ENCODE measurements at regions of chr18 and their contacts with region 1.

Region 1: GRCh38 chr18:9082711-9083510 is 19.6 kb upstream of the NDUFV2 start:
- DNase-seq: peak; percentile 74
- H3K4me3 Mint-ChIP-seq: peak overlapping the region; percentile 69
- H3K27ac Mint-ChIP-seq: peak overlapping the region; percentile 100
- H3K4me1 Mint-ChIP-seq: peaks cover 78% of the 10 kb centered on the region
- H3K27me3 Mint-ChIP-seq: no peaks in the 10 kb centered on the region

Region 2: DNA sequence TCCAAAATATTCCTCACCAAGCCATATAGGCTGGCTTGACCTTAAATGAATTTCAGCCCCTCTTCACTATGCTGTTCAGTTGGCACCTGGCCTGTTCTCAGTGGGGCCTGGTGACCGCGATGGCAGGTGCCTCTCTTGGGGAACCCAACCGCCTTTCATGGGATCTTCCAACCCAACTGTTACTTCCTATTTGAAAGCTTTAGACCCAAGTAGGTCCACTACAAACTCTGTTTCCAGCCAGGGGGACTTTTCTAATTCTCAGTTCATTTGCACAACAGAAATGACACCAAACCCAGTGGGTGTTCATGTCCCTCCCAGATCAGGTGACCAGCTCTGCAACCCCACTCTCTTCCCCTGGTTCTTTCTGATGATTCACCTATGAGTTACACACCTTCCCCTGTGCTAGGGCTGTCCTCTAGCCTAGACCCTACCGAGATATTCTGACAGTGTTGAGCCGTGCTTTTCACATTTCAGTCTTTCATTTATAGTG is 16.0 kb before region 1 on chr18:
- CTCF ChIA-PET with region 1: no interaction called
- POLR2A ChIA-PET with region 1: interaction called, 1,351 read pairs
- DNase-seq: no peak
- H3K4me3 Mint-ChIP-seq: no peak overlapping the region
- H3K27ac Mint-ChIP-seq: peak overlapping the region; percentile 81
- H3K4me1 Mint-ChIP-seq: peaks cover 45% of the 10 kb centered on the region
- H3K27me3 Mint-ChIP-seq: no peaks in the 10 kb centered on the region

Region 3: DNA sequence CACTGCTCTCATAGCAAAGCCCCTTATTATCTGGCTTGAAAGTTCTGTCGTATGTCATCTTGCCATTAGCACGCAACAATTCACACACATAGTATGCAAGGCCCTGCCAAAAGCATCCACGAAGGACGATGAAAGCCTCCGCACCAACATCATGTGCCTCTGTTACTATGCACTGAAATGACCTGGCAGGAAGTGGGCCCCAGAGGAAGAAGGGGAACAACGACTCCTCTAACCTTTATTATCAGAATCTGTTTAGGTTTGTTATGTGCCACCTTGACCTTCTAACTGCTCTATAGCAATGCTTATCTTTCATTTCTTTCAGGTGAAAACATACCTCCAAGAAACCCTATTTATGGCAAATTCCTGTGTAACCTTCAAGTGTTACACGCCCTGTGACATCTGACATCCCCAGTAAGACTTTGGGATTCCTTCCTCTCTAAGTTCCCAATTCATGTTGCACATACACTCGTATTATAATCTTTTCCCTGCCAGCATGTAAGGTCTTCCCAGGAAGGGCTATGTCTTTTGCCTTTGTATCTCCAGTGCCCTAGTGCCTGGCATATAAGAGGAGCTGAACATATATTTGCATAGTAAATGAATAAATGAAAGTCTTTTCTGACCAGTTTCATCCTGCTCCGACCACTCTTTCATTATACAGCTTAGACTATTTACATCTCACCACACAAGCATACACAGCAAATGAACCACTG is 12.5 kb after region 1 on chr18:
- CTCF ChIA-PET with region 1: interaction called, 19 read pairs
- POLR2A ChIA-PET with region 1: interaction called, 1,351 read pairs
- DNase-seq: peak; percentile 77
- H3K4me3 Mint-ChIP-seq: peak overlapping the region; percentile 62
- H3K27ac Mint-ChIP-seq: peak overlapping the region; percentile 98
- H3K4me1 Mint-ChIP-seq: peaks cover 71% of the 10 kb centered on the region
- H3K27me3 Mint-ChIP-seq: no peaks in the 10 kb centered on the region

Region 4: GRCh38 chr18:9102508-9103375 is 19.8 kb after region 1 on chr18 and contains the start of gene NDUFV2:
- CTCF ChIA-PET with region 1: interaction called, 17 read pairs
- POLR2A ChIA-PET with region 1: interaction called, 1,351 read pairs
- DNase-seq: peak; percentile 99
- H3K4me3 Mint-ChIP-seq: peak within 1 kb of the TSS; percentile 94
- H3K27ac Mint-ChIP-seq: peak within 1 kb of the TSS; percentile 96
- H3K4me1 Mint-ChIP-seq: peaks cover 46% of the 10 kb centered on the region
- H3K27me3 Mint-ChIP-seq: no peaks in the 10 kb centered on the region
- total RNA-seq, gene NDUFV2: 288 to 295 TPM

Region 5: DNA sequence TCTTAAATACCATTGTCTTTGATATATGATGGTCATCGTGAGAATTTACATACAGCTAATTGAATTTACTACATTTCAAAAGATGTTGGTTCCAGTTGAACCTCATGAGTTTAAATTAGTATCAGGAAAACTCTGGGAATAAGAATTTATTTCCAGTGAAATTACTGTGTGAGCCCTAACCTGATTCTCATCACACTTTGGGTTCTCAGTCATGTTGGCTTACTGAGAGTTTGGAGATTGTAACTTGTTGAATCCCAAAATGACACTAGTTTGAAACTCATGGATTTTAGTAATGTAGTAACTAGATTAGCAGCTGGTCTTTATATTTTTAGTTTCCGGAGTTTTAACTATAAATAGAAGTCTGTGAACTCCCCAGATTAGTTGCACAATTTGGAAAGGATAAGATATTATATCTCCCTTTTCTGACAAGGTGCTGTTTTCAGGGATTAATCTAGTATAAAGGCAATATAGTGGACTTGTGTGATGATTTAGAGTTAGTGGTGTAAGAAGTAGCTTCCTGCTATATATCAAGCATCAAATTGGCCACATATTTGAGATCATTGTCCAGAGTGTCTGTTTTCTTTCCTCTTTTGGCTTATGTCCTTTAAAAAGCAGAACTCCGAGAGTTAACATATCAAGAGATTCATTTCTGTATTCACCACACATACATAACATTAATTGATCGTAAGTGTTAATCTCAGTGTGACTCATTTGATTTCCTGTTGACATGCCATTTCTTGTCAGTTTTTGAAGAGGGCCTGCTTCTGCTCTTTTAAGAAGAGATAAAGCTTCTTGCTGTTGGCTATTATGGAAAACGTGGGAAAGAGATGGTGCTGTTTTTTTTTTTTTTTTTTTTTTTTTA is 35.3 kb after region 1 on chr18:
- CTCF ChIA-PET with region 1: interaction called, 8 read pairs
- POLR2A ChIA-PET with region 1: interaction called, 479 read pairs
- DNase-seq: no peak
- H3K4me3 Mint-ChIP-seq: peak overlapping the region; percentile 50
- H3K27ac Mint-ChIP-seq: peak overlapping the region; percentile 76
- H3K4me1 Mint-ChIP-seq: peaks cover 78% of the 10 kb centered on the region
- H3K27me3 Mint-ChIP-seq: no peaks in the 10 kb centered on the region

Region 6: GRCh38 chr18:9126337-9126736 is 43.4 kb after region 1 on chr18:
- CTCF ChIA-PET with region 1: no interaction called
- POLR2A ChIA-PET with region 1: interaction called, 479 read pairs
- DNase-seq: no peak
- H3K4me3 Mint-ChIP-seq: no peak overlapping the region
- H3K27ac Mint-ChIP-seq: no peak overlapping the region
- H3K4me1 Mint-ChIP-seq: peaks cover 44% of the 10 kb centered on the region
- H3K27me3 Mint-ChIP-seq: no peaks in the 10 kb centered on the region

Region 7: DNA sequence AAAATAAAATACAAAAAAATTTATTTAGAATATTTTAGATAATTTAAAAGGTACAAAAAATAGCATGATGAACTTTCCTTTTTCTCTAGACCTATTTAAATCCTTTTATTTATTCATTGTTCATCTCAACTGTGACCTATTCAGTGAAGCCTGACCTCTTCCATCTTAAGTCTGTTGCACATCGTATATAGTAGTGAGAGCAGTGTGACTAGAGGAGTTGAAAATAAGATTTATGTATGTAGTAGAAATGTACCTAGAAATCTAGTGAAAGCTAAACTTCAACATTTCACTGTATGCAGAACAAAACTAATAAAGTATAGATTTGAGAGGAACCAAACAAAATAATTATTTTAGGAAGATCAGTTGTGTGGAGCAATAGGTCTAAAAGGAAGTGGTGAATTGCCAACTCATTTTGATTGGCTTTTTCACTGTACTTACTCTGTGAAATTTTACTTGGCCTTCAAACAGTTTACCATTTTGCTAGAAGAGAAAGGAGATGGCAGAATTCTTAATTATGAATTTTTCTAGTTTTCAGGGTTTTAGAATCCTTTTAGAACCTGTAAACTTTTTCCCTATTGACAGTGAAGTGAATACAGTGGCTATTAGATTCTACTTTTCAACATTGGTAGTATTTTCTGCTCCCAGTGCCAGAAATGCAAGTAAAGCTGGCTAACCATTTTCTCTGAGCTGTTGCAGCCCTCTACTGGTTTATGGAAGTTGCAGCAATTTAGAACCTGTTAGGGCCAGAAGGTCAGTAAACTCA is 64.7 kb after region 1 on chr18:
- CTCF ChIA-PET with region 1: interaction called, 6 read pairs
- POLR2A ChIA-PET with region 1: interaction called, 752 read pairs
- DNase-seq: peak; percentile 30
- H3K4me3 Mint-ChIP-seq: peak overlapping the region; percentile 26
- H3K27ac Mint-ChIP-seq: peak overlapping the region; percentile 81
- H3K4me1 Mint-ChIP-seq: peaks cover 73% of the 10 kb centered on the region
- H3K27me3 Mint-ChIP-seq: no peaks in the 10 kb centered on the region